ENCODE measurements at regions of chr2 and their contacts with region 1.

Region 1: GRCh38 chr2:218849721-218850120 is 9.9 kb upstream of the WNT6 start:
- DNase-seq: peak in 1 of 2 donors; percentile 26
- H3K4me3 ChIP-seq: no peak overlapping the region
- CTCF ChIP-seq: no peak
- POLR2A ChIP-seq: no peak

Region 2: GRCh38 chr2:218406209-218406948 is 443.3 kb before region 1 on chr2:
- intact Hi-C with region 1: loop called (anchors 5 kb)
- DNase-seq: peak; percentile 94 to 99
- H3K4me3 ChIP-seq: no peak overlapping the region
- CTCF ChIP-seq: peak in 1 of 3 donors; percentile 51
- POLR2A ChIP-seq: no peak

Region 3: GRCh38 chr2:218727502-218728165 is 122.1 kb before region 1 on chr2:
- intact Hi-C with region 1: loop called (anchors 10 kb)
- DNase-seq: no peak
- H3K4me3 ChIP-seq: no peak overlapping the region
- CTCF ChIP-seq: no peak
- POLR2A ChIP-seq: no peak

Region 4: GRCh38 chr2:218754201-218754600 is 95.5 kb before region 1 on chr2:
- intact Hi-C with region 1: no loop called
- DNase-seq: no peak
- H3K4me3 ChIP-seq: no peak overlapping the region
- CTCF ChIP-seq: no peak
- POLR2A ChIP-seq: no peak

Measured in lower leg skin (tissue), 4 donors.